MCF 10A (cell line): ENCODE measurements at regions of chr11 and their contacts with region 1.

Region 1: GRCh38 chr11:112289588-112290492 is 29.2 kb upstream of the PLET1 start:
- DNase-seq: peak; percentile 59
- H3K4me3 Mint-ChIP-seq: peak overlapping the region; percentile 67
- H3K27ac Mint-ChIP-seq: no peak overlapping the region
- H3K4me1 Mint-ChIP-seq: peaks cover 16% of the 10 kb centered on the region
- H3K27me3 Mint-ChIP-seq: peaks cover 11% of the 10 kb centered on the region
- CTCF ChIP-seq: peak; percentile 96

Region 2: DNA sequence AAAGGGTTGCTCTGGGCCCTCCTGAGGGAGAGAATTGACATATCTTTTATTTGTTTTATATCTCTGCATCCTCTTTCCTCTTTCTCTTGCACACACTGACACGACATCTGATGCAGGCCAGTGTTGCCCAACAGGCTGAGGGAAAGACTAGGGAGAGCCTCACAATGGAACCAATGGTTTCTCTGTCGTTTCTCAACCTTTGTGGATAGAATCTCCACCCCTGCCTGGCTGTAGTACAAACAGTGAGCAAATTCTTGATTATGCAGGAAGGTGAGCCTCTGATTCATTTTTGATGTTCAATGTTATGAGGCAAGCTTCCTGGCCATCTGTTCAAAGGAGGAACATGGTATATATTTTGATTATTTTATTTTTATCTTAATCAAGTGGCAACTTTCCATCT is 20.6 kb after region 1 on chr11:
- CTCF ChIA-PET with region 1: interaction called, 3 read pairs
- POLR2A ChIA-PET with region 1: interaction called, 3 read pairs
- intact Hi-C with region 1: loop called (anchors 1 kb)
- DNase-seq: peak; percentile 97
- H3K4me3 Mint-ChIP-seq: no peak overlapping the region
- H3K27ac Mint-ChIP-seq: no peak overlapping the region
- H3K4me1 Mint-ChIP-seq: peaks cover 16% of the 10 kb centered on the region
- H3K27me3 Mint-ChIP-seq: no peaks in the 10 kb centered on the region
- CTCF ChIP-seq: no peak

Region 3: GRCh38 chr11:112364962-112365481 is 75.2 kb after region 1 on chr11:
- CTCF ChIA-PET with region 1: no interaction called
- POLR2A ChIA-PET with region 1: no interaction called
- intact Hi-C with region 1: loop called (anchors 5 kb)
- DNase-seq: peak; percentile 69
- H3K4me3 Mint-ChIP-seq: no peak overlapping the region
- H3K27ac Mint-ChIP-seq: no peak overlapping the region
- H3K4me1 Mint-ChIP-seq: peaks cover 14% of the 10 kb centered on the region
- H3K27me3 Mint-ChIP-seq: no peaks in the 10 kb centered on the region
- CTCF ChIP-seq: no peak

Region 4: DNA sequence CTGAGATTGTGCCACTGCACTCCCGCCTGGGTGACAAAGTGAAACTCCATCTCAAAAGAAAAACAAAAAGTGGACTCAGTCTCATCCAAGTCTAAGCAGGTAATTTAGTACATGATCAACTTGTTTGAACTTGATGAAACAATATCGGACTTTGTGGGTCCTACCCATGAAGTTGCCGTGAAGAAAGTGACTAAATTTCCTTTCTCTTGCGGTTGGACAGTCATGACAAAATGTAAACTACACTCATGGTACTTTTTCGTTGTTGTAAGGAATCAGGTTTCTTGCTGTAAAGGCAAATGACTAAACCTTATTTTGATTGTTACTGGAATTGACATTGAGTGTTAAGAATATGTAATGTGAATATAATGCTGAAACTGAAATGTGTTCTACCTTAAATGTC is 135.3 kb after region 1 on chr11:
- CTCF ChIA-PET with region 1: no interaction called
- POLR2A ChIA-PET with region 1: no interaction called
- intact Hi-C with region 1: no loop called
- DNase-seq: peak; percentile 22
- H3K4me3 Mint-ChIP-seq: no peak overlapping the region
- H3K27ac Mint-ChIP-seq: no peak overlapping the region
- H3K4me1 Mint-ChIP-seq: no peaks in the 10 kb centered on the region
- H3K27me3 Mint-ChIP-seq: peaks cover 39% of the 10 kb centered on the region
- CTCF ChIP-seq: no peak

Region 5: DNA sequence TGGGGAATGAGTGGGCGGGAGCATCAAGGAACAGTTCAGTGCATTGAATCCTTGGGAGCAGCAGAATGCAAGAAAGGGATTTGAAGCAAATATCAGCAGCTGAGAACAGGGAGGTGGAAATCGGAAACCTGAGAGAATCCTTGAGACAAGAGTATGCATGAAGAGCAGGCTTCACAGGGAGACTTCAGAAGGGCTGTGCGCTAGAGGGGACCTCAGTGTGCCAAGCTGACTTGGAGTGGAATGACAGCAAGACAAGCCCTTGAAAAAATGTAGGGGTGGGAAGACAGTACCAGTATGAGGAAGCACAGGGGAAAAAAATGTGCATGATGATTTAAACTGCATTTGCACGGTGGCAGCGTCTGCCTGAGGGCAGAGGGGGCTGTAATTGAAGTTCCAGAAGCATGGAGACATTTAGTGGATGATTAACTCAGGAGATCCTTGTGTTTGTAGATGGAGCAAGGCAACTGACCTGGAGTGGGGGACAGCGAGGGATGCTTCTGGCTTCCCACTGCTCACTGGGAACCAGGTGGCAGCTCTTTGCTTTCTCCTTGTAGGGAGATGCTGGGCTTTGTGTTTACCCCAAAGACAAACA is 175.7 kb after region 1 on chr11:
- CTCF ChIA-PET with region 1: no interaction called
- POLR2A ChIA-PET with region 1: no interaction called
- intact Hi-C with region 1: no loop called
- DNase-seq: no peak
- H3K4me3 Mint-ChIP-seq: no peak overlapping the region
- H3K27ac Mint-ChIP-seq: no peak overlapping the region
- H3K4me1 Mint-ChIP-seq: peaks cover 3% of the 10 kb centered on the region
- H3K27me3 Mint-ChIP-seq: peaks cover 30% of the 10 kb centered on the region
- CTCF ChIP-seq: no peak

Region 6: DNA sequence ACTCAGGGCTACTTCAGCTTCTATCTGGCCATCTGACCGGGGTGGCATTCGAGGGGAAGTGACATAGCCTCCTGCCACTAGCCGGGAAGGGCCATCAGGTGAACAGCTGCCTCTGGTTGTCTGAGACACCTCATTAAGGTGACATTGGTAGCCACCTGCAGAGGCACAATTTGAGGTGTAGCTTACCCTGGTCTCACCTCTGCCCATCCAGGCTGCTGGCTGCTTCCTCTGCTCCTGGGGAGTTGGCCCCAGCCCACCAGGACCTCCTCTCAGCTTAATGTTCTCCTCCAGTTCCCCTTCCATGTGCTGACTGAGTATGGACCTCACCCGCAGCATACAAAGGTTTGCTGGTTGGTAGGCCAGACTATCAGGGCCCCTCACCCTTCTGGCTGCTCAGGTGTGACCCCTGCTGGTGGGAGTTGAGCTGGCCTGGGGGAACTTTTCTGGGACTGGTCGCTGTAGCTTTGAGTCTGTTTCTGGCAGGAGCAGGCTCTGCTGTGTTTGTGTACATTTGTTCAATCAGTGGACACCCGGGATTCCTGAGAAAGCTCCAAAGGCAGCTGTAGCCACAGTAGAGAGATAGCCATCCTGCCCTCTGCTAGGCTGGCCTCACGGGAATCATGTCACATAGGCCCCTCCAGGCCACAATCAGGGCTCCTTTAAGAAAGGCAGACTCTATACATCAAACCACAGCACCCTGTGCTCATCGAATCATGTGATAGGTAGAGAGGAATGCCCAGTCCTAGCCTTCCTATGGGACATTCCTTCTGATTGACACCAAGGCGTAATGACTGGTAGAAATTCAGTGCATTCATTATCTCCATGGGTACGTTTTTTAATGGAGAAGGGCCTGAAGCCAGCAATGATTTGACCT is 265.9 kb after region 1 on chr11:
- CTCF ChIA-PET with region 1: interaction called, 4 read pairs
- POLR2A ChIA-PET with region 1: no interaction called
- intact Hi-C with region 1: loop called (anchors 2 kb)
- DNase-seq: peak; percentile 57
- H3K4me3 Mint-ChIP-seq: no peak overlapping the region
- H3K27ac Mint-ChIP-seq: no peak overlapping the region
- H3K4me1 Mint-ChIP-seq: no peaks in the 10 kb centered on the region
- H3K27me3 Mint-ChIP-seq: peaks cover 16% of the 10 kb centered on the region
- CTCF ChIP-seq: peak; percentile 48

Region 7: GRCh38 chr11:112795142-112795815 is 505.4 kb after region 1 on chr11:
- CTCF ChIA-PET with region 1: interaction called, 11 read pairs
- POLR2A ChIA-PET with region 1: no interaction called
- intact Hi-C with region 1: loop called (anchors 1 kb)
- DNase-seq: peak; percentile 72
- H3K4me3 Mint-ChIP-seq: no peak overlapping the region
- H3K27ac Mint-ChIP-seq: no peak overlapping the region
- H3K4me1 Mint-ChIP-seq: no peaks in the 10 kb centered on the region
- H3K27me3 Mint-ChIP-seq: no peaks in the 10 kb centered on the region
- CTCF ChIP-seq: peak; percentile 77